ENCODE measurements at regions of chr11 and their contacts with region 1.

Region 1: DNA sequence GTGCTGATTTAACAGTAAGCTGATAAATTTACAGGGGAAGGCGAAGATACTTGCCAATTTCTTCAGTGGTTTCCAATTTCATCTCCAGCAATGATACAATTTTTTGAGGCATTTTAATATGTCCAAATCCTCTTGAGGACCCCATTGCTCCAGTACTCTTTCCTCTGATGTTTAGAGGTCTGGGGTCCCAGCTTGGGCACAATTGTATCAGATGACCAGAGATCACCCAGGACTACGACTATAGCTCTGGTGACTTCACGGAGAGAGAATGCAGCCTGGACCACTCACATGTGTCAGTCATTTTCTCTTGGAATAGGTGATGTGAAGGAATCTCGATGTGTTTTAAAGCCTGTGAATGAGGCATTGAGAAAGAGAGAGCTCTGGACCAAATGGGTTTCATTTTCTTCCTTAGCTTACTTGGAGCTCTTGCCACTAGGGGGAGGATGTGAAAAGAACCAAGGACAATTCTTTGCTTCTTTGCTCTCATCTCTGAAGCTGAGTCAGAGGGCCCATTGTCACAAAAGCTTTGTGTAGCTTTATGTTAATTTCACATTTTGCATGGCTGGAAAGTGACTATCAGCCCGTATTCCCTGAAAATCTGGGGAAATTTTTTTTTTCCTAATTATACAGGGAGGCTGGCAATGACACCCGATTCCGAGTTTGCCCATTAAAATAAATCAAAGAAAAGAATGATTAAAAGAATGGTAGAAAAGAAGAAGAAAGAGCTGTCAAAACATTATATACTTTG is 6.7 kb upstream of the CCDC90B start:
- DNase-seq: peak; percentile 75
- H3K4me3 ChIP-seq: peak overlapping the region; percentile 50
- H3K27ac ChIP-seq: no peak overlapping the region
- H3K4me1 ChIP-seq: peaks cover 33% of the 10 kb centered on the region
- CTCF ChIP-seq: peak; percentile 87

Region 2: DNA sequence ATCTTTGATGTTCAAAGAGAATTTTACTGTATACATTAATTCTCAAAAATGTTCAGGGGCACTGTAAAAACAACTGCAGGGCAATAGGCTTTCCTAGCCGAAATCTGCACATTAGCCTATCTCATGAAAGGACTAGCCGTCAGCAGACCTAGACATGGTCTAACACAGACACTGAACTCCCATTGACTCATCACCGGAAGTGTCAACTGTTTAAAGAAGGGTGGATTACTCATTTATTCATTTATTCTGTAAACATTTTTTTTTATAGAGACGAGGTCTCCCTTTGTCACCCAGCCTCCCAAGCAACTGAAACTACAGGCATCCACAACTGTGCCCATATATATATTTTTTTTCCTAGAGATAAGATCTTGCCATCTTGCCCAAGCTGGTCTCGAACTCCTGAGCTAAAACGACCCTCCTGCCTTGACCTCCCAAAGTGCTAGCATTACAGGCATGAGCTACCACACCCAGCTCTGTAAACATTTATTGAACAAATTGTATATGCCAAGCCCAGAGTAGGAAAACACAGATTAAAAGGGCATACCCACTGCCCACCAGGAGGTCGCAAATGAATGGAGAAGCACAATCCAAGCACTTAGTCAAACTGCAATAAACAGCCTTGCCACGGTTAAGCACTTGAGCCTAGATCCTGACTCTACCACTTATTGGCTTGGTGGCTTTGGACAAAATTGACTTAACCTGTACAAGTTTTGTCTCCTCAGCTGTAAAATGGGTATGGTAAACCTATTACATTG is 247.7 kb before region 1 on chr11:
- CTCF ChIA-PET with region 1: no interaction called
- POLR2A ChIA-PET with region 1: no interaction called
- intact Hi-C with region 1: no loop called
- DNase-seq: peak; percentile 53
- H3K4me3 ChIP-seq: peak overlapping the region; percentile 9
- H3K27ac ChIP-seq: no peak overlapping the region
- H3K4me1 ChIP-seq: peaks cover 64% of the 10 kb centered on the region
- CTCF ChIP-seq: no peak

Region 3: GRCh38 chr11:83724008-83724461 is 431.2 kb after region 1 on chr11:
- CTCF ChIA-PET with region 1: no interaction called
- POLR2A ChIA-PET with region 1: no interaction called
- intact Hi-C with region 1: loop called (anchors 5 kb)
- DNase-seq: peak; percentile 47
- H3K4me3 ChIP-seq: peak overlapping the region; percentile 15
- H3K27ac ChIP-seq: no peak overlapping the region
- H3K4me1 ChIP-seq: no peaks in the 10 kb centered on the region
- CTCF ChIP-seq: peak; percentile 71

Measured in OCI-LY7 (cell line).